Activated CD8-positive, alpha-beta T cell treated with anti-CD3 and anti-CD28 coated beads for 36 hours (primary cell): ENCODE measurements at regions of chr10 and their contacts with region 1.

Region 1: GRCh38 chr10:92517034-92517655 is 56.7 kb downstream of the IDE start:
- DNase-seq: peak; percentile 82
- ATAC-seq: peak; percentile 89
- H3K4me3 Mint-ChIP-seq: no peak overlapping the region
- H3K27ac Mint-ChIP-seq: no peak overlapping the region
- H3K4me1 Mint-ChIP-seq: peaks cover 6% of the 10 kb centered on the region
- H3K27me3 Mint-ChIP-seq: no peaks in the 10 kb centered on the region
- CTCF ChIP-seq: peak; percentile 82

Region 2: GRCh38 chr10:92303096-92303495 is 214.0 kb before region 1 on chr10:
- CTCF ChIA-PET with region 1: no interaction called
- POLR2A ChIA-PET with region 1: no interaction called
- intact Hi-C with region 1: no loop called
- DNase-seq: no peak
- ATAC-seq: peak; percentile 49
- H3K4me3 Mint-ChIP-seq: no peak overlapping the region
- H3K27ac Mint-ChIP-seq: peak overlapping the region; percentile 69
- H3K4me1 Mint-ChIP-seq: peaks cover 47% of the 10 kb centered on the region
- H3K27me3 Mint-ChIP-seq: no peaks in the 10 kb centered on the region
- CTCF ChIP-seq: no peak

Region 3: DNA sequence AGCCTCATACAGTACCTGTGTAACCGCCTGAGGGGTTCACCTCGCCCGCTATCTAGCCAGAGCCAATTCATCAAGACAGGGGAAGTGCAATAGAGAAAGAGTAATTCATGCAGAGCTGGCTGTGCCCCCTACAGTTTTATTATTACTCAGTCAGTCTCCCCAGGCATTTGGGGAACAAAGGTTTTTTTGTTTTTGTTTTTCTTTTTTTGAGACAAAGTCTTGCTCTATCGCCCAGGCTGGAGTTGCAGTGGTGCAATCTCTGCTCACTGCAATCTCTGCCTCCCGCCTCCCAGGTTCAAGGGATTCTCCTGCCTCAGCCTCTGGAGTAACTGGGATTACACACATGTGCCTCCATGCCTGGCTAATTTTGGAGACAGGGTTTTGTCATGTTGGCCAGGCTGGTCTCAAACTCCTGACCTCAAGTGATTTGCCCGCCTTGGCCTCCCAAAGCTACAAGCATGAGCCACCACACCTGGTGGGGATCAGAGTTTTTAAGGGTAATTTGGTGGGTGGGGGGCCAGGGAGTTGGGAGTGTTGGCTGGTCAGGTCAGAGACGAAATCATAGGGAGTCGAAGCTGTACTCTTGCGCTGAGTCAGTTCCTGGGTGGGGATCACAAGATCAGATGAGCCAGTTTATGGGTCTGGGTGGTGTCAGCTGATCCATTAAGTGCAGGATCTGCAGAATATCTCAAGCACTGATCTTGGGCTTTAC is 109.7 kb before region 1 on chr10:
- CTCF ChIA-PET with region 1: no interaction called
- POLR2A ChIA-PET with region 1: no interaction called
- intact Hi-C with region 1: no loop called
- DNase-seq: no peak
- ATAC-seq: no peak
- H3K4me3 Mint-ChIP-seq: no peak overlapping the region
- H3K27ac Mint-ChIP-seq: no peak overlapping the region
- H3K4me1 Mint-ChIP-seq: no peaks in the 10 kb centered on the region
- H3K27me3 Mint-ChIP-seq: peaks cover 2% of the 10 kb centered on the region
- CTCF ChIP-seq: no peak

Region 4: GRCh38 chr10:92470041-92470440 is 47.1 kb before region 1 on chr10:
- CTCF ChIA-PET with region 1: no interaction called
- POLR2A ChIA-PET with region 1: no interaction called
- intact Hi-C with region 1: no loop called
- DNase-seq: no peak
- ATAC-seq: no peak
- H3K4me3 Mint-ChIP-seq: no peak overlapping the region
- H3K27ac Mint-ChIP-seq: no peak overlapping the region
- H3K4me1 Mint-ChIP-seq: no peaks in the 10 kb centered on the region
- H3K27me3 Mint-ChIP-seq: no peaks in the 10 kb centered on the region
- CTCF ChIP-seq: no peak

Region 5: DNA sequence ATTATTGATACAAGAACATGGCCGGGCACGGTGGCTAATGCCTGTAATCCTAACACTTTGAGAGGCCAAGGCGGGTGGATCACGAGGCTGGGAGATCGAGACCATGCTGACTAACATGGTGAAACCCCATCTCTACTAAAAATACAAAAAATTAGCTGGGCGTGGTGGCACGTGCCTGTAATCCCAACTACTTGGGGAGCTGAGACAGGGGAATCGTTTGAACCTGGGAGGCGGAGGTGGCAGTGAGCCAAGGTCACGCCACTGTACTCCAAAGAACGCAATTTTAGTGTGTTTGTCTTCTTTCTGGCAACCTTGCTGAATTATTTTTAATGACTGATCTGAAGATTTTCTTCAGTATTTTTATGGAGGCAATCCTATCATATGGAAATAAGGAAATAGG is 10.6 kb after region 1 on chr10:
- CTCF ChIA-PET with region 1: interaction called, 14 read pairs
- POLR2A ChIA-PET with region 1: no interaction called
- intact Hi-C with region 1: no loop called
- DNase-seq: no peak
- ATAC-seq: no peak
- H3K4me3 Mint-ChIP-seq: no peak overlapping the region
- H3K27ac Mint-ChIP-seq: no peak overlapping the region
- H3K4me1 Mint-ChIP-seq: no peaks in the 10 kb centered on the region
- H3K27me3 Mint-ChIP-seq: no peaks in the 10 kb centered on the region
- CTCF ChIP-seq: no peak

Region 6: GRCh38 chr10:92573798-92574547 is 56.8 kb after region 1 on chr10 and contains the start of gene IDE:
- CTCF ChIA-PET with region 1: interaction called, 62 read pairs
- POLR2A ChIA-PET with region 1: interaction called, 9 read pairs
- intact Hi-C with region 1: loop called (anchors 1 kb)
- DNase-seq: peak; percentile 86
- ATAC-seq: peak; percentile 79
- H3K4me3 Mint-ChIP-seq: peak within 1 kb of the TSS; percentile 71
- H3K27ac Mint-ChIP-seq: peak within 1 kb of the TSS; percentile 90
- H3K4me1 Mint-ChIP-seq: peaks cover 33% of the 10 kb centered on the region
- H3K27me3 Mint-ChIP-seq: no peaks in the 10 kb centered on the region
- CTCF ChIP-seq: no peak
- total RNA-seq, gene IDE: 30.1 to 33.2 TPM

Region 7: DNA sequence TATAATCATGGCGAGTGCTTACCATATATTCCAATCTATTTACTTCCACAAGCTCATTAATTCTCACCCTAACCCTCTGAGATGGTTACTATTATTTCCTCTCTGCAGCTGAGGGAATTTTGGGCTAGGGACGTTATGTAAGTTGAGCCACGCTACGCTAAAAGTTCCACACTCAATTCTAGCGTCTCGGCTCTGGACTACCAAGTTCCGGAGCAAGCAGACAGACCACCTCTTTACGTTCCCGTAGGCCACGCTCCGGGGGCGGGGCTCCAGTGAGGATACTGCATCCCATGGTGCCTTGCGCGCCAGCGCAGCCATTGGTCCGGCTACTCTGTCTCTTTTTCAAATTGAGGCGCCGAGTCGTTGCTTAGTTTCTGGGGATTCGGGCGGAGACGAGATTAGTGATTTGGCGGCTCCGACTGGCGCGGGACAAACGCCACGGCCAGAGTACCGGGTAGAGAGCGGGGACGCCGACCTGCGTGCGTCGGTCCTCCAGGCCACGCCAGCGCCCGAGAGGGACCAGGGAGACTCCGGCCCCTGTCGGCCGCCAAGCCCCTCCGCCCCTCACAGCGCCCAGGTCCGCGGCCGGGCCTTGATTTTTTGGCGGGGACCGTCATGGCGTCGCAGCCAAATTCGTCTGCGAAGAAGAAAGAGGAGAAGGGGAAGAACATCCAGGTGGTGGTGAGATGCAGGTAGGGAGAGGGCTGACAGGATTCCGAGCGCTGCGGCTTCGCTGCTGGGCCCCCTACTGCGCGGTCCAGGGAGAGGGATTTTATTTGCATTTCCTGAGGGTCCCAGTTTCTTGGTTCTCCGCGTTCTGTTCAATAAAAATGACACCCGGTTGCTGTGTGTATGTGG is 75.8 kb after region 1 on chr10 and contains the start of gene KIF11:
- CTCF ChIA-PET with region 1: no interaction called
- POLR2A ChIA-PET with region 1: no interaction called
- intact Hi-C with region 1: loop called (anchors 5 kb)
- DNase-seq: peak; percentile 100
- ATAC-seq: peak; percentile 86
- H3K4me3 Mint-ChIP-seq: peak within 1 kb of the TSS; percentile 95
- H3K27ac Mint-ChIP-seq: peak within 1 kb of the TSS; percentile 98
- H3K4me1 Mint-ChIP-seq: peaks cover 23% of the 10 kb centered on the region
- H3K27me3 Mint-ChIP-seq: peaks cover 4% of the 10 kb centered on the region
- CTCF ChIP-seq: no peak
- total RNA-seq, gene KIF11: 43.8 to 44.4 TPM